Activated B cell treated with CpG ODN at 0.5 μM for 24 hours (primary cell): ENCODE measurements at regions of chr3 and their contacts with region 1.

Region 1: DNA sequence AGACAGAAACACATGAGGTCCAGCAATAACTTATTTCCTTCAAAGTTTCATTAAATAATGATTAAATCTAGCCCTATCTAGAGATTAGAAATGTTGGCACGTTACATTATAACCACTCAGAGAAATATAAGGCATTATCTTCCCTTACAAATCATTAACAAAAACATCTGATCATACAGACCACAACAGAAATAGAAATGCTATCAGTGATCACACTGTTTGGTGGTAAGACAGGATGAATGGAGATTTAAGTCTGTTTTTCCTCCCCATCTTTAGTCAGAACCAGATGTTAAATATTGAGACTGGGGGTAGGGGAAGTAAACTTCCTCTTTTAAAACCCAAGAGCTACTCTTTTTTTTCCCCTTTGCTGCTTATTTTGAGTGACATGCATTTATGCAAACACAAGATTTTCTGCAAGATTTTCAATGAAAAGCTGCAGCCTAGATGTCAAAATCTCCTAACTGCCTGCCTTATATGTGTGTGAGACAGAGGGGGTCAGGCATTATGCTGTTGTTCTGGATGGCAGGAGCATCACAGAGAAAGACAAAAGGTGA is 70.4 kb downstream of the CBLB start:
- DNase-seq: no peak
- ATAC-seq: peak; percentile 77
- H3K4me3 Mint-ChIP-seq: peak overlapping the region; percentile 55
- H3K27ac Mint-ChIP-seq: peak overlapping the region; percentile 81
- H3K4me1 Mint-ChIP-seq: peaks cover 73% of the 10 kb centered on the region
- H3K27me3 Mint-ChIP-seq: no peaks in the 10 kb centered on the region
- CTCF ChIP-seq: no peak

Region 2: DNA sequence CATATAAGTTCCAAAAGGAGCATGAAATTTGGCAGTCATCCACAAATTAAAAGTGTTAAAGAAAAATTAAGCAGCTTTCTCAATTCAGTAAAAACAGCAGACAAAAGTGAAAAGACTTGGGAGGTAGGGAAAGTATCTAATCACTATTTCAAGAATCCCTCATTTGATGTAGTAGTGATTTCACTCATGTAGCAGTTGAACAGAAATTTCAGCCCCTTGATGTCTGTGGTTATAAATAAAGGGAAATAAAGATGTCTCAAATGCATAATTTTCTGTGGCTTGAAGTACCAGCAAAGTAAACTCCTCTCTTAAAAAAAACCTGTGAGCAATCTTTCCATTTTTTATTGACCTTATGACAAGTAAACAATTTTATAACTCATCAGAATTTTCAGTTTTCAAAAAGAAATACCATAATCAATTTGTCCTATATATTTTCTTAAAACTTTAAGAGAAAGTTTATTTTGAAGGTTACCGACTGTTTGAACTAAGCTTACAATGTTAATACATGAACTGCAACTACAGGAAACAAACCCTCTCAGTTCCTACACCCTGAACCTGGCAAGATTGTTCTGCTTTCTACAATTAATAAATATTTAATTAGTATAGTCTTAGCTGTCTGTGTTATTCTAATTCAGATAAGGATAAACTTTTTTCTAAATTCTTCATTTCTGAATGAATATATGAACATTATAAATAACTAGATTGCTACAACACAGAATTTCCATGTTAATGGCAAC is 23.8 kb before region 1 on chr3:
- CTCF ChIA-PET with region 1: no interaction called
- POLR2A ChIA-PET with region 1: interaction called, 3 read pairs
- intact Hi-C with region 1: loop called (anchors 2 kb)
- DNase-seq: no peak
- ATAC-seq: peak; percentile 31
- H3K4me3 Mint-ChIP-seq: no peak overlapping the region
- H3K27ac Mint-ChIP-seq: peak overlapping the region; percentile 67
- H3K4me1 Mint-ChIP-seq: peaks cover 51% of the 10 kb centered on the region
- H3K27me3 Mint-ChIP-seq: no peaks in the 10 kb centered on the region
- CTCF ChIP-seq: no peak

Region 3: GRCh38 chr3:105827959-105828358 is 29.5 kb after region 1 on chr3:
- CTCF ChIA-PET with region 1: no interaction called
- POLR2A ChIA-PET with region 1: interaction called, 22 read pairs
- intact Hi-C with region 1: loop called (anchors 1 kb)
- DNase-seq: no peak
- ATAC-seq: no peak
- H3K4me3 Mint-ChIP-seq: no peak overlapping the region
- H3K27ac Mint-ChIP-seq: peak overlapping the region; percentile 50
- H3K4me1 Mint-ChIP-seq: peaks cover 72% of the 10 kb centered on the region
- H3K27me3 Mint-ChIP-seq: no peaks in the 10 kb centered on the region
- CTCF ChIP-seq: no peak

Region 4: GRCh38 chr3:105853801-105854432 is 55.5 kb after region 1 on chr3:
- CTCF ChIA-PET with region 1: interaction called, 3 read pairs
- POLR2A ChIA-PET with region 1: no interaction called
- intact Hi-C with region 1: loop called (anchors 1 kb)
- DNase-seq: peak; percentile 46
- ATAC-seq: peak; percentile 99
- H3K4me3 Mint-ChIP-seq: peak overlapping the region; percentile 66
- H3K27ac Mint-ChIP-seq: peak overlapping the region; percentile 99
- H3K4me1 Mint-ChIP-seq: peaks cover 51% of the 10 kb centered on the region
- H3K27me3 Mint-ChIP-seq: no peaks in the 10 kb centered on the region
- CTCF ChIP-seq: no peak

Region 5: DNA sequence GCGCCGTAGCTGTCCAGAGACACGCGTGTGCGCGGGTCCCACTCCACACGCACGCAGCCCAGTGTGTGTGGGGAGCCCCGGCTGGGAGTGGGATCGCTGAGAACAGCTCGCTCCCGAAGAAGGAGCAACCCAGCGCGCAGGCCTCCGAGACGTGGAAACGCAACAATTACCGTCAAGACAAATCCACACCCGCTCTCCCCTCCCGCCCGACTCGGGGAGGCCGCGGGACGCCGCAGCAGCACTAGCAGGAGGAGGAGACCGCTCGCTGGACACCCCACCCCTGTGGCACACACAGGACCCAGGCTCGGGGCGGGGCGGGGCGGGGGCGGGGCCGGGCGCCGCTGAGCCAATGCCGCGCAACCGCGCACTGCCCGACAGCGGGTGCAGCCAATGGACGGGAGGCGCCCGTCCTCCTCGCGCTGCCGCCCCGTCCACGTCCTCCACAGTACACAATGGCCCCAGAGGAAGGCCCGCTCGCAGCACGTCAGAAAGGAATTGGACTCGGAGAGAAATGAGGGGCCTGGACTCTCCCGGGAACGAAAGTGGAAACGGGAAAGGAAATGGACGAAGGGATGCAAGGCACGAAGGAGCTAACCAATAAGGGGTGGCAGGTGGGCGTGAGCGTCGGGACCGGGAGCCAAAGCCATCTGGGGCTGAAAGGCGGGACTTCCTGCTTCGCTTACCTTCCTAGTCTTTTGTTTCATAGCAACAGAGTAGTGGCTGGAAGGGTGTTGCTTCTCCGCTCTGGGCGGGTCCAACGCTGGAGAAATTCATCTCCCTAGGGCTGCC is 70.5 kb after region 1 on chr3 and contains the start of gene CBLB:
- CTCF ChIA-PET with region 1: no interaction called
- POLR2A ChIA-PET with region 1: interaction called, 18 read pairs
- intact Hi-C with region 1: loop called (anchors 1 kb)
- DNase-seq: peak; percentile 78
- ATAC-seq: peak; percentile 93
- H3K4me3 Mint-ChIP-seq: peak within 1 kb of the TSS; percentile 100
- H3K27ac Mint-ChIP-seq: peak within 1 kb of the TSS; percentile 99
- H3K4me1 Mint-ChIP-seq: peaks cover 53% of the 10 kb centered on the region
- H3K27me3 Mint-ChIP-seq: no peaks in the 10 kb centered on the region
- CTCF ChIP-seq: no peak
- total RNA-seq, gene CBLB: 69.2 and 78.1 TPM in 2 replicates

Region 6: DNA sequence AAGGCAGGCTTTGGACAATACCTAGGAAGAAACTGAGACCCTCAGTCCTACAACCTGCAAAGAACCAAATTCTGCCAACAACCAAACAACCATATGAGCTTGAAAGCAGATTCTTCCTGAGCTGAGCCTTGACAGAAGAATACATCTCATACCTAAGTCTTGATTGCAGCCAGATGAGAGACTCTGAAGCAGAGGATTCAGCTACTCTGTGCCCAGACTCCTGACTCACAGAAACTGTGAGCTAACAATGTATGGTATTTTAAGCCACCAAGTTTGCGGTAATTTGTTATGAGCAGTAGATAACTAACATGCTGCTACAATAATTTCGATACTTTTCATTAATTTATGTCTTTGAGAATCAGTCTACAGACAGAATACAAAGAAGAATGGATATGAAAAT is 395.4 kb after region 1 on chr3:
- CTCF ChIA-PET with region 1: no interaction called
- POLR2A ChIA-PET with region 1: no interaction called
- intact Hi-C with region 1: no loop called
- DNase-seq: no peak
- ATAC-seq: no peak
- H3K4me3 Mint-ChIP-seq: no peak overlapping the region
- H3K27ac Mint-ChIP-seq: no peak overlapping the region
- H3K4me1 Mint-ChIP-seq: no peaks in the 10 kb centered on the region
- H3K27me3 Mint-ChIP-seq: no peaks in the 10 kb centered on the region
- CTCF ChIP-seq: no peak